Left cardiac atrium (tissue), 4 donors: ENCODE measurements at regions of chr16 and their contacts with region 1.

Region 1: GRCh38 chr16:87375426-87376135 is 8.0 kb downstream of the FBXO31 start:
- DNase-seq: no peak
- ATAC-seq: peak; percentile 83 to 84

Region 2: GRCh38 chr16:87324411-87325275 is 50.9 kb before region 1 on chr16:
- intact Hi-C with region 1: loop called (anchors 10 kb)
- DNase-seq: no peak
- ATAC-seq: peak; percentile 41 to 53